ENCODE measurements at regions of chr12 and their contacts with region 1.

Region 1: DNA sequence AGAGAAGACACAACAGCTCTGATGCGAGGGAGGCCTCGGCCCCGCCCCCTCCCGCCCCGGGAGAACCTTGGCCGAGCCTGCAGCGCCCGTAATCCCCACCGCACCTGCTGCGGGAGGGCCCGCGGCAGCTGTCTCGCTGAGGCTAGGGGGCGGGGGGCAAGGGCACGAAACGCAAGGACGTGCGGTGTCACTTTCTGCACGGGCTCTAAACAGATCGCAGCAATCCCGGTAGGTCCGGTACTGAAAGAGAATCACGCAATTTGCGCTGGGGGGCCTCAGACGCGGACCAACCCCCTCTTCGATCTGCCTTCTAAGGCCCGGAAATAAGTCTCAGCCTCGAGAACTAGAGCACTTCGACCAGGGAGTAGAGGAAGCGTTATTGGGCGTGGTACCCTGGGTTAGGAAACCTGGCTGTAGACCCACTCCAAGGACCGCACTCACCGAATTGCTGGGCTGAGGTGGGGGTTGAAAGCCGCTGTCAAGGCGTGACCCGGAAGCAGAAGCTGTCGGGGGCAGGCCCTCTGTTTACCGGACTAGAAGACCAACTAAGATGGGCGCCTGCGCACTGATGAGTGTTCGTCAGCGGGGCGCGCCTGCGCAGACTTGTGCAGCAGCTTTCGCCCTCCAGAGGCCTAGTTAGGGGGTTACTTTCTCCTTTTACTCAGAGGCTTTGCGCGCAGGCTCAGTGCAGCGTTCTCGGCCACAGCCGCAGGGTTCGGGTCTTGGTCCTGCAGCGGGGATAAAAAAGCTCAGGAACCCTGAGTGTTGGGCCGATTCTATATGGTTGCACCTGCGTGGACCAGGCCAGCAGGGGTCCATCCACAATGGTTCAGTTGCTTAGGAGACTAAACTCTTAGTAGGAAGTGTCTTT is at the start of gene ASB8:
- DNase-seq: peak; percentile 99
- H3K4me3 ChIP-seq: peak within 1 kb of the TSS; percentile 81
- H3K27ac ChIP-seq: peak within 1 kb of the TSS; percentile 64
- H3K4me1 ChIP-seq: peaks cover 13% of the 10 kb centered on the region
- CTCF ChIP-seq: peak; percentile 68
- total RNA-seq, gene ASB8: 19.9 and 26.6 TPM in 2 replicates

Region 2: DNA sequence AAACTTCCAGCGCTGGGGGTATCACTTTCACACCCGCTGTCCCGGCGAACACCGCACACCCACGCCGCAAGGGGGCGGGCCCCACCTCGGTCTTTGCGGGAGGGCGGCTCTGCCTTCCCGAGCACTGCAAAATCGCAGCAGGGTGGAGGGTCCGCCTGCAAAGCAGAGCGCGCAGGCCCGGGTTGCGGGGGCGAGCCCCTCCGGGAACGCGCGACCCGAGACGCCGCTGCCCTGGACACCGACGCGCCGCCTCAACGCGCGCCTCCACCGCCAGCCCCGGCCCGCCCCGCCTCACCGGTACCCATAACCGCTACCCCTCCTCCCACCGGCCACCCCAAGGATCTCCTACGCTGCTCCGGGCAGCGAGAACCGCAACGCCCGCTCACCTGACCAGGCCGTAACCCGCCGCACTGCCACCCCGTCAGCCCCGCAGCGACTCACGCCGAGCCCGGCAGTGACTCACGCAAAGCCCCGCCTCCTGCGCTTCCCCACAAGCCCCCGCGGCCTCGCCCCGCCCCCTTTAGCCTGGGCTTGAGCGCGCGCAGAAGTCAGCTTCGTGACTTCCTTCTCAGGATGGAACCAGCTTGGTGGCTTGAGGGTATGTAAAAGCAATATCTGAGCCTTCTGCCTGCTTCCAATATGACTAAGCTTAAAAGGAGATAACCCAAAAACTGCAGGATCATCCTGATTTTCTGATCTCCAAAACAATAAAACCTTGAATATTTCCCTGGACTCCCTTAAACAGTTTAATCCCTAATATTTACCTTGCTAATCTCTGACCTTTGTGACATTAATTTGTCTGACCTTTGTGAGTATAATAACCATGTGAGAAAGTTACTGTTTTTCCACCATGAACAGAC is 451.5 kb before region 1 on chr12 and contains the start of gene RPAP3:
- CTCF ChIA-PET with region 1: no interaction called
- POLR2A ChIA-PET with region 1: no interaction called
- intact Hi-C with region 1: loop called (anchors 2 kb)
- DNase-seq: peak; percentile 97
- H3K4me3 ChIP-seq: peak within 1 kb of the TSS; percentile 86
- H3K27ac ChIP-seq: peak within 1 kb of the TSS; percentile 83
- H3K4me1 ChIP-seq: peaks cover 54% of the 10 kb centered on the region
- CTCF ChIP-seq: peak; percentile 74
- total RNA-seq, gene RPAP3: 21.6 and 25.1 TPM in 2 replicates

Region 3: GRCh38 chr12:47990351-47991105 is 166.7 kb before region 1 on chr12:
- CTCF ChIA-PET with region 1: no interaction called
- POLR2A ChIA-PET with region 1: interaction called, 5 read pairs
- intact Hi-C with region 1: loop called (anchors 1 kb)
- DNase-seq: peak; percentile 88
- H3K4me3 ChIP-seq: no peak overlapping the region
- H3K27ac ChIP-seq: peak overlapping the region; percentile 76
- H3K4me1 ChIP-seq: peaks cover 24% of the 10 kb centered on the region
- CTCF ChIP-seq: no peak

Region 4: DNA sequence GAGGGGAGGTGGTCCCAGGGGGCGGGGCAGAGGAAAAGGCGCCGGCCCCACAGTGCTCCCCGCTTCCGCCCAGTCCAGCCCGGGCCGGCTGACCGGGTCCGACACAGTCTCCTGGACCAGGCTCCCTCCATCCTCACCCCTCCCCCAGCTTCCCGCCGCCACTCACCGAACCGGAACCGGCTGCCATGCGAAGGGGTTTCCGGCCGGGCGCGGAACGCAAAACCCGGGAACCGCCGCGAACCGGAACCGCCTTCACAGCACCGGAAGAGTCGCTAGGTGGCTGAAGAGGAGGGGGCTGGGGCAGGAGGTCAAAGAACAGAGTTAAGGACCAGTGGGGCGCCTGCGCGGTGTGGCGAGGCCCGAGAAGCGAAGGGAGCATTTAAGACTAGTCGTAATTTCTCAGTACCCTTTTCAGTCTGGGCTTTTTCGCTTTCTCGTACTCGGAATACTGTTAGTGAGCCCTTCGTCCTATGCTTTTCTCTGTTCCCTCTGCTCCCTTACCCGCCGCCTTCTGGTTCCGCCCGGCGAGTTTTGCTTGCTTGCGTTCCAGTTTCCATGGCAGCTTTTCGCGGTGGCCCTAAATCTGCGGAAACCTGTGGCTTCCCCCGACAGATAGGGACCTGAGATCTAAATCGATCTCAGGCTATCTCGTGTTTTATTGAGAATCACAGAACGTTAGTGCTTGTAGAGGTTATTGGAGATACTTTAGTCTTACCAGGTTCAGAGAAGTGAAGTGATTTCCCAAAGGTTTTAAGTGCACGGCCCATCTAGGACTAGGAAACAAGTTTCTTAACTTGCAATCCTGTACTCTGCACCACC is 51.2 kb before region 1 on chr12 and contains the start of gene SENP1:
- CTCF ChIA-PET with region 1: interaction called, 3 read pairs
- POLR2A ChIA-PET with region 1: interaction called, 17 read pairs
- intact Hi-C with region 1: loop called (anchors 1 kb)
- DNase-seq: peak; percentile 92
- H3K4me3 ChIP-seq: peak within 1 kb of the TSS; percentile 96
- H3K27ac ChIP-seq: peak within 1 kb of the TSS; percentile 94
- H3K4me1 ChIP-seq: peaks cover 40% of the 10 kb centered on the region
- CTCF ChIP-seq: no peak; the same call in 1 of the 2 replicates
- total RNA-seq, gene SENP1: 29.9 and 48.3 TPM in 2 replicates

Region 5: DNA sequence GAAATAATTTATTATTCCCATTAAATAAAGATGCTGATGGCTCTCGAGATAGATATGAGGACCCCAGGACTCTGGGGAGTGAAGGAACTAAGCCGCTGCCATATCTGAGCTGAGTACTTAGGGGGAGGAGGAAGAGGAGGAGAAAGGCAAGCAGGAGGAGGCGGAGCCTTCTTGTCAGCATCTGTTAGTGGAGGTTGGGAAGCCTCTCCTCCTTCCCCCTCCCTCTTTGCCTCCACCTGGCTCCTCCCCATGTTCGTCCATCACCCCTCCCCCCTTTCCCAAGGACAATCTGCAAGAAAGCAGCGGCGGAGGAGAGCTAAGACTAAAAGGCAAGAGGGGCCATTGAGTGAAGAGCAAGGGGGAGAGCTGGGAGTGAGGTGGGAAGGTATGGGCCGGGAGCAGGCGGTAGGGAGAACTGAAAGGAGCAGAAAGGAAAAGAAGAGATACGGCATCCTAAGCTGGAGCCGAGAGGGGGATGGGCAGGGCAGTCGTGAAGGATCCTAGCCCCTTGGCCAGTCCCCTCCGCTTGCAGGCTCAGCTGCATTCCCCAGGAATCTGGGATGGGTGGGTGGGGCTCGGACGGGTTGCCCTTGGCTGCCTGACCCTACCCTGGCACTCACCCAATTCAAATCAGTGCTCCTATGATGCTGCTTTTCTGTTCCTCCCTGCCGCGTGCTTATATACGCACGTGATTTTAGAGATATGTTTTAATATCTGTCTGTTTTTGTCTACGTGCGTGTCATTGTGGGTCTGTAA is 38.0 kb before region 1 on chr12 and contains the start of gene PFKM:
- CTCF ChIA-PET with region 1: no interaction called
- POLR2A ChIA-PET with region 1: interaction called, 6 read pairs
- intact Hi-C with region 1: loop called (anchors 2 kb)
- DNase-seq: peak; percentile 87
- H3K4me3 ChIP-seq: peak within 1 kb of the TSS; percentile 86
- H3K27ac ChIP-seq: peak within 1 kb of the TSS; percentile 40
- H3K4me1 ChIP-seq: peaks cover 21% of the 10 kb centered on the region
- CTCF ChIP-seq: no peak
- total RNA-seq, gene PFKM: 37.4 and 42.3 TPM in 2 replicates

Region 6: GRCh38 chr12:48286665-48287064 is 129.4 kb after region 1 on chr12:
- CTCF ChIA-PET with region 1: no interaction called
- POLR2A ChIA-PET with region 1: no interaction called
- intact Hi-C with region 1: no loop called
- DNase-seq: peak; percentile 8
- H3K4me3 ChIP-seq: no peak overlapping the region
- H3K27ac ChIP-seq: no peak overlapping the region
- H3K4me1 ChIP-seq: no peaks in the 10 kb centered on the region
- CTCF ChIP-seq: peak; percentile 75

Measured in OCI-LY7 (cell line).